Mammary epithelial cell (primary cell): ENCODE measurements at regions of chr11 and their contacts with region 1.

Region 1: DNA sequence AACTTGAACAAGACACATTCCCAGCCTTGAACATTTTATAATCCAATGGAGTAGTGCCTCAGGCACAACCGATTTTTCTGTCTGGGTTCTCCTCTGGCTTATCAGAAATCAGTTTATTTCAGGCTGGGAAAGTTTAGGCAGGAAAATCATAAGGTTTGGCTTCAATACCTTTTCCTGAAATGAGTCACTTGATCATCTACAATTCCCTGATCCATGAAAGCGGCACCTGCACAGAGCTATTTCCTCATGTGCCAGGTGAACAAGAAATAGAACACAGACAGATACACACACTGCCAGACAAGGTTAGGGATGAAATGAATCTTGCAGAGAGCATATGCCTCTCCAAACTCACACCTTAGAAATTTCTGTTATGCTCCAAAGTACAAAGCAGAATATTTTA is 106.7 kb upstream of the OR9G4 start:
- DNase-seq: no peak
- H3K4me3 ChIP-seq: no peak overlapping the region
- H3K27ac ChIP-seq: no peak overlapping the region
- H3K4me1 ChIP-seq: peaks cover 16% of the 10 kb centered on the region
- H3K27me3 ChIP-seq: no peaks in the 10 kb centered on the region
- CTCF ChIP-seq: no peak

Region 2: DNA sequence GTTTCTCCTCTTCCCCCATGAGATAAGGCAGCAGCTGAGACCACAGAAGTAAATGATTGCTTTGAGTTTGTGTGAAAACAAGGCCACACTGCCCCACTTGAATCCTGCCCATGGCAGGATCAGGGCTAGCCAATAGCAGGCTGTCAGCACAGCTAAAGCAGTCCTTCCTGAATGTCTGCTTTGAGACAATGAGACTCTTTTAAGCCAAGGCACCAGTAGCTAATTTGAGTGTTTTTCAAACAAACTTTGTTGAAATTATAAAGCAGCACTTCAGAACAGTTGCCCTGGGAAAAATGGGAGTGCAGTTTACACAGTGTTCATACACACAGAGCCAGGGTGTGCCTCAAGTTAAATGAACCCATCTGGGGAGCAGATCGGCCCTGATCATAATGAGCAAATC is 30.0 kb after region 1 on chr11:
- CTCF ChIA-PET with region 1: no interaction called
- dilution Hi-C with region 1: no loop called
- in situ Hi-C with region 1: no loop called
- intact Hi-C with region 1: no loop called
- DNase-seq: peak; percentile 28
- H3K4me3 ChIP-seq: no peak overlapping the region
- H3K27ac ChIP-seq: no peak overlapping the region
- H3K4me1 ChIP-seq: peaks cover under 1% of the 10 kb centered on the region
- H3K27me3 ChIP-seq: no peaks in the 10 kb centered on the region
- CTCF ChIP-seq: no peak

Region 3: GRCh38 chr11:56906683-56907148 is 51.5 kb after region 1 on chr11:
- CTCF ChIA-PET with region 1: no interaction called
- dilution Hi-C with region 1: loop called (anchors 5 kb)
- in situ Hi-C with region 1: no loop called
- intact Hi-C with region 1: loop called (anchors 2 kb)
- DNase-seq: peak; percentile 91
- H3K4me3 ChIP-seq: no peak overlapping the region
- H3K27ac ChIP-seq: peak overlapping the region; percentile 100
- H3K4me1 ChIP-seq: peaks cover 50% of the 10 kb centered on the region
- H3K27me3 ChIP-seq: no peaks in the 10 kb centered on the region
- CTCF ChIP-seq: no peak

Region 4: GRCh38 chr11:56917708-56918400 is 62.6 kb after region 1 on chr11:
- CTCF ChIA-PET with region 1: no interaction called
- dilution Hi-C with region 1: no loop called
- in situ Hi-C with region 1: no loop called
- intact Hi-C with region 1: no loop called
- DNase-seq: no peak
- H3K4me3 ChIP-seq: no peak overlapping the region
- H3K27ac ChIP-seq: no peak overlapping the region
- H3K4me1 ChIP-seq: peaks cover 2% of the 10 kb centered on the region
- H3K27me3 ChIP-seq: no peaks in the 10 kb centered on the region
- CTCF ChIP-seq: no peak

Region 5: DNA sequence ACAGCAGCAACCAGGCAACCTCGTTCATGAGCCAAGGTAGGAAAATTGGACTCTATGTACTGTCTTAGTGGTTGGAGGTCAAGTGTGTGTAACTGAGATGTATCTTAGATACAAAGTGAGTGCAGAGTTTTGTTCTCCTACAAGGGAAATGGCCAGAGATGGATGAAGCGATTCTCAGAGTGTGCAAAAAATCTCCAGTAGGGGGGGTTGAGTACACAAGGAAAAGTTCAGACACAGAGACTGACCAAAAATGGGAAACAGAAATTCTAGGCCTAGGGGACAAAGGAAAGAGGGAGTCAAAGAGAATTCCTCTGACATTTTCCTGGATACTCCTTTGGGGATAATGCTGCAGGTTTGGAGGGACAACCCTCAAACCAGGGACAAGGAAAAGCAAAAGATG is 95.3 kb after region 1 on chr11:
- CTCF ChIA-PET with region 1: no interaction called
- dilution Hi-C with region 1: no loop called
- in situ Hi-C with region 1: loop called in 1 of 2 experiments (anchors 25 kb)
- intact Hi-C with region 1: no loop called
- DNase-seq: no peak
- H3K4me3 ChIP-seq: no peak overlapping the region
- H3K27ac ChIP-seq: no peak overlapping the region
- H3K4me1 ChIP-seq: no peaks in the 10 kb centered on the region
- H3K27me3 ChIP-seq: no peaks in the 10 kb centered on the region
- CTCF ChIP-seq: peak; percentile 19 to 48